ENCODE measurements at regions of chr11 and their contacts with region 1.

Region 1: DNA sequence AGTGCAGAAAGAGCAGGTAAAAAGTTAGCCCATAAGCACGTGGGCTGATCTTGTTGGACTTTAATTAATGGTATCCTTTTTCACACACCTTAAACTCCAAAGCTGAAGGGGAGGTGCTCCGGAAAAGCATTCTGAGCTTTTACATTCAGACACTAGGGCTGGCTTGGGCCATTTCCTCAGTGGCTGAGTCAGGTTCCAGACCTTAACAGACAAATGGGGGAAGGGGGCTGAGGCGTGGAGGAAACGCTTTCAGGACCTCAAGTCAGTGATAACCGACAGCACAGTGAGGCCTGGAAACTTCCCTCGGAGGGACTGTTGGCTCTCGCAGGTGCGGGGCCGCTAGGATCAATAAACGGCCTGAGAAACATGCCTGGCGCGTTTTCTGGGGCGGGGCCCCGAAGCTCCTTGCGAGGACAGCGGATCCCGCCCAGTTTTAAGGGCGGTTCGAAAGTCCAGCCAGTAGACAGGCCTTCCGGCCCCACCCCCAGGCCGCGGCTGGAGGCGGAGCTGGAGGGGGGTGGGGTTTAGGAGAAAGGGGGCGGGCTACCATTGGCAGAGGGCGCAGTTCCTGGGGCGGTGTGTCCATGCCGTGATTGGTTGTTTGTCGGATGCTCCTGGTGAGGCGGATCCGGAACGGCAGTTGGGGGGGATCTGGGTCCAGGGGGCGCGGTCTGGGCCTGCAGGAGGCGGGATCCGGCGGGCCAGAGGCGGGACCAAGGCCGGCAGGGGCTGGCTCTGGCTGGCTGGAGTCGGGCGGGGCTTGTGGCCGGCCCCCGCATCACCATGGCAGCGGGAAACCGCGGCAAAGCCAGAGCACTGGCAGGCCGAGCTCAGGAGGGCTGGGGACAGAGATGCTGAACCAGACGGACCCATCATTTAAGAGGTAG is 8.0 kb downstream of the C11orf52 start:
- DNase-seq: peak; percentile 95
- H3K4me3 Mint-ChIP-seq: peak overlapping the region; percentile 82
- H3K27ac Mint-ChIP-seq: peak overlapping the region; percentile 88
- H3K4me1 Mint-ChIP-seq: peaks cover 12% of the 10 kb centered on the region
- H3K27me3 Mint-ChIP-seq: no peaks in the 10 kb centered on the region

Region 2: DNA sequence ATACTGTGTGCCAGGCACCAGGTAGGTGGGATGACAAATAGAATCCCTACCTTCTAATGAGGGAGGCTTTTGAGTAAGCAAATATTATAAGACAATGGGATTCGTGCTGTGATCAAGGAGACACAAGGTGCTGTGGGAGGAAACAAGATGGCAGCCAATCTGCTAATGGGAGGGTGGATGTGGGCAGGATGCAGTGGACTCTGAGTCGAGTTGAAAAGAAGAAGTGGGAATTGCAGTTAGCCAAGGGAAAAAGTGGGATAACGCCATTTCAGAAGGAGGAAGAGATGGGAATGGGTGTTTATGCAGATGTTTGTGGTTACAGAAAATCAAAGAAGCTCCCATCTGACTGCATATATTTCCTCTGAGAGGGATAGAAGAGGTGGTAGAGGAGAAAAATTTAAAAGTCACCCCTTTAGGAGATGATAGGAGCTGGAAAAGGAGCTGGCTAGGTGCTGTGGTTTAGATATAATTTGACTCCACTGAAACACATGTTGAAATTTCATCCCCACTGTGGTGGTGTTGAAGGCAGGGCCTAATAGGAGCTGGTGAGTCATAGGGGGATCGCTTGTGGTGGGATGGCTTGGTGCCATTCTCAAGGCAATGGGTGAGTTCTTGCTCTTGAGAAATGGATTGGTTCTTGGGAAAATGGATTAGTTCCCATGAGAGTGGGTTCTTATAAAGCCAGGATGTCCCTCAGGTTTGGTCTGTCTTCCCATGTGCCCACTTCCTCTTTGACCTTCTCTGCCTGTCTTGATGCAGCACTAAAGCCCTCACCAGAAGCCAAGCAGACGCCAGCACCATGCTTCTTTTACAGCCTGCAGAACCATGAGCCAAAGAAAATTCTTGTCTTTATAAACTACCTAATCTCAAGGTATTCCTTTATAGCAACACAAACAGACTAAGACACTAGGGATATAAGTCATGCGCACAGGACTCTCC is 517.7 kb before region 1 on chr11:
- CTCF ChIA-PET with region 1: no interaction called
- intact Hi-C with region 1: no loop called
- DNase-seq: no peak
- H3K4me3 Mint-ChIP-seq: no peak overlapping the region
- H3K27ac Mint-ChIP-seq: no peak overlapping the region
- H3K4me1 Mint-ChIP-seq: peaks cover 17% of the 10 kb centered on the region
- H3K27me3 Mint-ChIP-seq: no peaks in the 10 kb centered on the region

Region 3: GRCh38 chr11:111766093-111766833 is 160.5 kb before region 1 on chr11 and contains the start of gene PPP2R1B:
- CTCF ChIA-PET with region 1: no interaction called
- intact Hi-C with region 1: loop called (anchors 2 kb)
- DNase-seq: peak; percentile 78
- H3K4me3 Mint-ChIP-seq: peak within 1 kb of the TSS; percentile 100
- H3K27ac Mint-ChIP-seq: peak within 1 kb of the TSS; percentile 96
- H3K4me1 Mint-ChIP-seq: peaks cover 33% of the 10 kb centered on the region
- H3K27me3 Mint-ChIP-seq: no peaks in the 10 kb centered on the region
- total RNA-seq, gene PPP2R1B: 36.7 to 43.8 TPM

Region 4: DNA sequence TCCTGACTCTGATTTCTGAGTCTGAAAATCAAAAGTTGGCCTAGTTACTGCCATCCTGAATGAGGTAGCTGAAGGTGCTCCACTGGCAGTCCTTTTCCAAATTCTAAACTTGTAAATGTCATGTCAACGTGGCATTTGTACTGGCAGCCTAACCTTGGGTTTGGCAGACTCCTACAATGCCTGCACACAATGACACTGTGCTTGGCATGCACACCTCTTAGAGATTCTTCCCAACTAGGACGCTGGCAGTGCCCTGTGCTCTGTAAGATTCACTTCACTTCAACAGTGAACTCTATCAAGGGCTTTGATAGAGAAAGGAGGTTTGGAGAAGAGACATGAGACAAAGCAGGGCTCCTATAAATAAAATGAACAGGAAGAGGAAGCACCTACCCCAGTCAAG is 138.7 kb before region 1 on chr11:
- CTCF ChIA-PET with region 1: no interaction called
- intact Hi-C with region 1: no loop called
- DNase-seq: no peak
- H3K4me3 Mint-ChIP-seq: no peak overlapping the region
- H3K27ac Mint-ChIP-seq: no peak overlapping the region
- H3K4me1 Mint-ChIP-seq: no peaks in the 10 kb centered on the region
- H3K27me3 Mint-ChIP-seq: no peaks in the 10 kb centered on the region

Region 5: DNA sequence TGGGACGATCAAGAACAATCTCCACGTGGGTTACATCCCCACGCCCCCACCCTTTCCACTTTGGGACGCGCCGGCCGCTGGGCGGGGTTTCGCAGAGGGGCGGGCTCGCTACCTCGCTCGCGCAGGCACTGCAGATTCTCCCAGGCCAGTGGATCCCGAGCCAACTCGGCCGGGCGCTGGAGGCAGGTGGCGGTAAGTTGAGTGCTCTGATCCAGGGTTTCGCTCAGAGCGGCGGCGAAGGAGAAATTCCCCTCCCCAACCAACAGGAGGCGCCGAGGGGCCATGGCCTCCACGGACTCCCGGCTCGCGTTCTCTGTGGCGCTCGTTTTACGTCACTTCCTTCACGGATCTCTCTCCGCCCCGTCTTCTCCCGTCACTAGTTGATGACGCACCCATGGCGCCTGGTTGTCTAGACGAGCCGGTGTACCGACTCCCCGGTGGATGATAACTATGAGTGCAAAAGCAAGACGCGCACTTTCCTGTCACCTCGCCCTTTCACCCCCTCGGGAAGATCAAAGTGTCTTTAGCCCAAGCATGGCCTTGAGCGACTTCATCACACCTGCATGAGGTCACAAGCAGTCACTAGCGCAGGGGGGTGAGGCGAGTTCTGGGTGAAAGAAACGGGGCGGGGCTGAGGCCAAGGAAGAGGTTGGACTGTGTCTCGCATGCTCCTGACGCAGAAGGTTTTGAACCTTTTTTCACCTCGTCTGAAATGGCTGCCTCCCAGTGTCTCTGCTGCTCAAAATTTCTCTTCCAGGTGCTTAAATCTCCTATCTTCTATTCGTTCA is 47.7 kb before region 1 on chr11 and contains the starts of genes CFAP68 and FDXACB1:
- CTCF ChIA-PET with region 1: interaction called, 13 read pairs
- intact Hi-C with region 1: loop called (anchors 1 kb)
- DNase-seq: peak; percentile 97
- H3K4me3 Mint-ChIP-seq: peak within 1 kb of the TSS; percentile 98
- H3K27ac Mint-ChIP-seq: peak within 1 kb of the TSS; percentile 97
- H3K4me1 Mint-ChIP-seq: peaks cover 39% of the 10 kb centered on the region
- H3K27me3 Mint-ChIP-seq: no peaks in the 10 kb centered on the region
- total RNA-seq, gene CFAP68: 31.5 to 33.2 TPM
- total RNA-seq, gene FDXACB1: 3.4 to 3.8 TPM

Region 6: DNA sequence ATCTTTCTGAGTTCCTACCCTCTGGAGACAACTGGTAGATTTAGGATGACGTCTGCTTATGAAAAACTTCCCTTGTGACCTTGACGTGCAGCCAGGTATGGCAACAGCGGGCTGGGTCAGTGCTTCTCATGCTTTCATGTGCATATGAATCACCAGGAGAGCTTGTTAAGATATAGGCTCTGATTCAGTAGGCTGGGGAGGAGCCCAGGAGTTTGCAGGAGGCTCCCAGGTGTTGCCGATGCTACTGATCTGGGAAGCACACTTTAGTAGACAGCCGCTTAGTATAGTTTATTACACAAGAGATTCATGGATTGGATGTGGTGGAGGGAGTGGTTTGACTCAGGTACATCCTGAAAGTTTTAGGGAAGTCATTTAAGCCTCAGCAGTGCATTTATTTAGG is 34.2 kb after region 1 on chr11:
- CTCF ChIA-PET with region 1: interaction called, 10 read pairs
- intact Hi-C with region 1: no loop called
- DNase-seq: no peak
- H3K4me3 Mint-ChIP-seq: no peak overlapping the region
- H3K27ac Mint-ChIP-seq: no peak overlapping the region
- H3K4me1 Mint-ChIP-seq: no peaks in the 10 kb centered on the region
- H3K27me3 Mint-ChIP-seq: no peaks in the 10 kb centered on the region

Region 7: DNA sequence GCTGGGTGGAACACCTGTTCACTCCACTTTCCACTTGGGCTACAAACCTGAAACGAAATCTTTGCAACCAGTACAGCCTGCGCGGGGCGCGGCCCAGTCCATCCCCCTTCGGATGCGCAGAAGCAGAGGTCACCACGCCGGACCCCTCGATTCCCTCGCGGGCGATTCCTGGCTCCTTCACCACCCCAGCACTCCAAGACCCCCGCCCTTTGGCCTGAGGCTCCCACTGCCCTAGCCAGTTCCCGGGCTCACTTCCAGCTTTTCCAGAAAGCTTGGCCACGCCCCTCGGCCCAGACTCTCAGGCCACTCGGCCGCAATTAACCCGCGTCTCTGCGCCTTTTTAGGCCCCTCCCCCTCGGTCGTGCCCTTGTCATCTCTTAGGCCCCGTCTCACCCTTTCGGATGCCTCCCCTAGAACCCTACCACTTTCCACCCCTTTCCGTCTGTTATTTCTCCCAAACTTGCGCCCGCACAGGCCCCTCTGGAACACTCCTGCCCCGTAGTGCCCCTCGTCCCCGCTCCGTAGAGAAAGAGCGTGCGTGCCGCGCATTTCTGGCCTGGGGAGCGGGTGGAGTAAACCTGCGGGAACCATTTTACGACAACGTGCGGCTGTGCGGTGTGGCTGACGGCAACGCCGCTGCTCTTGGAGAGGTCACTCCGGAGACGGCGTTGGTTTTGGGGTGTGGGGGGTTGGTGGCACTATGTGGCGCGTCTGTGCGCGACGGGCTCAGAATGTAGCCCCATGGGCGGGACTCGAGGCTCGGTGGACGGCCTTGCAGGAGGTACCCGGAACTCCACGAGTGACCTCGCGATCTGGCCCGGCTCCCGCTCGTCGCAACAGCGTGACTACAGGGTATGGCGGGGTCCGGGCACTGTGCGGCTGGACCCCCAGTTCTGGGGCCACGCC is 98.3 kb after region 1 on chr11 and contains the start of gene DLAT:
- CTCF ChIA-PET with region 1: interaction called, 7 read pairs
- intact Hi-C with region 1: loop called (anchors 1 kb)
- DNase-seq: peak; percentile 89
- H3K4me3 Mint-ChIP-seq: peak within 1 kb of the TSS; percentile 100
- H3K27ac Mint-ChIP-seq: peak within 1 kb of the TSS; percentile 100
- H3K4me1 Mint-ChIP-seq: peaks cover 28% of the 10 kb centered on the region
- H3K27me3 Mint-ChIP-seq: no peaks in the 10 kb centered on the region
- total RNA-seq, gene DLAT: 34.2 to 36.8 TPM

Region 8: GRCh38 chr11:112226062-112226830 is 299.5 kb after region 1 on chr11 and contains the start of gene PTS:
- CTCF ChIA-PET with region 1: no interaction called
- intact Hi-C with region 1: loop called (anchors 2 kb)
- DNase-seq: peak; percentile 86
- H3K4me3 Mint-ChIP-seq: peak within 1 kb of the TSS; percentile 88
- H3K27ac Mint-ChIP-seq: peak within 1 kb of the TSS; percentile 91
- H3K4me1 Mint-ChIP-seq: peaks cover 17% of the 10 kb centered on the region
- H3K27me3 Mint-ChIP-seq: no peaks in the 10 kb centered on the region
- total RNA-seq, gene PTS: 34.6 to 39.0 TPM

Region 9: DNA sequence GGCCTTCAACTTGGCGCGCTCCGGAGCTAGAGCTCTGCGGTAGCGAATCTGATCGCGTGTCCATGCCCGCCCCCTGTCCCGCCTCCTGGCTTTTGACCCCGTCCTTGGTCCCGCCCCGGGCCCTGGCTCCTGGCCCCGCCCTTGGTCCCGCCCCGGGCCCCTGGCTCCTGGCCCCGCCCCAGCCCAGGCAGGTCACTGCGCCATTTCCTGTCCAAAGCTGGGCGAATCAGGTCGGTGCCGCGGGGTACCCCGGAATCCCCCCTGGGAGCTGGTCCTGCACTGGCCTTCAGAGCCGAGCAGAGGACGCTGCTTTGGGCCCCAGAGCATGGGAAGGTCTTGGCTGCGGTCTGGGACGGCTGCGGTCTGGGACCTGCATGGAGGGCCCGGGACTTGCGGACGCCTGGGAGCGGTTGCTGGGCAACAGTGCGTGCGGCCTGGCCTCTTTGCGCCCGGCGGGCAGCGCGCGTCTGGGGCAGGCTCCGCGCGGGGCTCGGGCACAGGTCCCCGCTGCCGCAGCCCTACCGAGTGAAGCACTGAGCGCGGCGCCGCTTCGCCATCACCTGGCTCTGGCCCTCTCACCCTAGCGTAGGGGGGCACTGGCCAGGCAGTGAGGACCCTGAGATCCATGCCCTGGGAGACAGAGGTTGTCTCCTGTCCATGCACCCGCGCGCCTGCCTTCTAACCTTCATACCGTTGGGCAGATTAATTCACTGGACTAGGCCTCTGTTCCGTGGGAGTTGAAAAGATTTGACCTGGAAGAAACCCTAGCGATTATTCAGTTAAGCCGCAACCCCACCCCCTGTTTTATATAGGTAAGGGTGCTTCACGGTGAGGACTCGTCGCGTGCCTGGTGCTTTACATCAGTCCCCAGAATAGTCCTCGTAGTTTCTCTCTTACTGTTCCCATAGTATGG is 1387.9 kb after region 1 on chr11 and contains the start of gene TTC12:
- CTCF ChIA-PET with region 1: no interaction called
- intact Hi-C with region 1: loop called (anchors 2 kb)
- DNase-seq: peak; percentile 95
- H3K4me3 Mint-ChIP-seq: peak within 1 kb of the TSS; percentile 80
- H3K27ac Mint-ChIP-seq: peak within 1 kb of the TSS; percentile 79
- H3K4me1 Mint-ChIP-seq: peaks cover 23% of the 10 kb centered on the region
- H3K27me3 Mint-ChIP-seq: no peaks in the 10 kb centered on the region
- total RNA-seq, gene TTC12: 4.1 to 7.4 TPM